ENCODE measurements at regions of chr1 and their contacts with region 1.

Region 1: GRCh38 chr1:223628233-223629125 is 37.0 kb downstream of the CAPN8 start:
- DNase-seq: peak; percentile 53
- CTCF ChIP-seq: peak; percentile 38

Region 2: DNA sequence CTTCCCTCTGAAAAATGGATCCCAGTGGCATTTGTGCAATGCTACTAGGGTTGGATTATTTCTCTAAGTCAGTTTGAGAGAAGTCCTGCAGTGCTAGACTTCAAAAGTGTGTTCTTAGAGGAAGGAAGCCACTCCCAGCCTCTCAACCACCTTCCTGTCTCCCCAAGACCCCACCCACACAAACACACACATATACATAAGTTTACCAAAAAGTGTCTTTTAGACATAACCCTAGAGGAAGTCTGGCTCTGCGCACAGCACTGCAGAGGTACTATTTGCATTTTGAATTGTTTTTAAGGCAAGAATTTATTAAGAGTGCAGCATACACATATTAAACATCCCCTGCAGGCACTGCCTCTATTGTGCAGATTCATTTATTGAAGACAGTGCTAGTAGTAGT is 1207.8 kb before region 1 on chr1:
- CTCF ChIA-PET with region 1: no interaction called
- POLR2A ChIA-PET with region 1: no interaction called
- DNase-seq: no peak
- CTCF ChIP-seq: no peak

Region 3: DNA sequence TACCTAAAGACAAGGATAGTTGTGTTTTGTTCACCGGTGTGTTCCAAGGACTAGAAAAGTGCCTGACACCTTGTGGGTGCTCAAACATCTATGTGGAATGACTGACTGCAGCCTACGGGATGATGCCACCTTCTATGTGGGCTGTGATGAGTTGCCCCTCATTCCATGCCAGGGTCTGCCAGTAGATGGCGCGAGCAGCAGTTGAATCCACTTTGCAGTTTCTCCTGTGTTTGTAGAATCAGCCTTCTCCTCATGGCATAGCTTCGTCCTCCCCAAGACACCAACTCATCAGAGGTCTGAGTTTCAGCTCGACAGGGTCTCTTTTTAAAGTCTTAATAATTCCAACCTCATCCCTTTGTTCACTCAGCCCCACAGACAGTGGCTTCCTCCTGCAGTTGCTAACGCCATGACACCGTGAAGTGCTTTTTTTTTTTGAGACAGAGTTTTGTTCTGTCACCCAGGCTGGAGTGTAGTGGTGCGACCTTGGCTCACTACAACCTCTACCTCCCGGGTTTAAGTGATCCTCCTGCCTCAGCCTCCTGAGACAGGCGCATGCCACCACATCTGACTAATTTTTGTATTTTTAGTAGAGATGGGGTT is 96.6 kb before region 1 on chr1:
- CTCF ChIA-PET with region 1: interaction called, 11 read pairs
- POLR2A ChIA-PET with region 1: no interaction called
- DNase-seq: peak; percentile 32
- CTCF ChIP-seq: peak; percentile 66

Region 4: DNA sequence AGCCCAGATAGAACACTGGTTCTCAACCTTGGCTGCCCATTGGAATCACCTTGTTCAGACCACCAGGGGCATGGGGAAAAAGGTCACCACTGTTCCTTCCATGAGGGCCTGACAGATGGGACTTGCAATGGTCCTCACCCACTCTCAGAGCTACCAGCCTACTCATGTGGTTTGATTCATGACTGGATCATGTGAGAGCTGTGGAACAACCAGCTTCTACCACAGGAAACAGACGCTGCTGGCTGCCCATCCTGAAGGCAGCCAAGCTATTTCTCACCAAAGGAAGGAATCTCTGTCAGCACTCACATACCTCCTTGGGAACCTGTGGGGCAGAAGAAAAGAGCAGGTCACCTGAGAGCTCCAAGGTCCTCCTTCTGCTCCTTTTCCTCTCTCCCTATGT is 16.5 kb before region 1 on chr1:
- CTCF ChIA-PET with region 1: interaction called, 40 read pairs
- POLR2A ChIA-PET with region 1: no interaction called
- DNase-seq: no peak
- CTCF ChIP-seq: no peak

Region 5: GRCh38 chr1:223639331-223639749 is 10.9 kb after region 1 on chr1:
- CTCF ChIA-PET with region 1: interaction called, 16 read pairs
- POLR2A ChIA-PET with region 1: no interaction called
- DNase-seq: no peak
- CTCF ChIP-seq: no peak